ENCODE measurements at regions of chr5 and their contacts with region 1.

Region 1: DNA sequence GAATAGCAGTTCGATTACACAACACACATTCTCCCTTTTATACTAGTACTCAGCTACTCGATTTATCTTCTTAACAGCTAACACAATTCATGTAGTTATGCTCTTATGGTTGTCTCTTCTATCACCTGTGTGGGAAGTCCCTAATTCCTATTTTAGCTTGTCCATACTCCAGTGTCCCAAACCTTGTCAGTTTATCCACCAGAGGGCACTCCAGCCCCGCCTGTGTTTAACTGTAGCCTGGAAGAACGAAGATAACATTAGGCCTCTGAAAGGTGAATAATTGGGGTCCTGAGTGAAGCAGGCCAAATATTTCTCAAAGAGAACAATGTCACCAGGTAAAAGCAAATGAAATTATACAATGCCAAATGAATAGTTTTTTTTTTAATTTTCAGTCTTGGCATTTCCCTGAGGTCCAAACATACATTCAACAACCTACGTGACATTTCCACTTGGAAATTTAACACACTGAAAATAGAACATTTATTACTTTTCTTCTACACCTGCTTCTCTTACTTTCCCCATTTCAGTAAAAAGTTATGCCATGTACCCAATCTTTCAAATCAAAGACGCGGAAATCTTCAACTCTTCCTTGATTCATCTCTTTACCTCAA is 560.7 kb downstream of the HTR1A start:
- DNase-seq: peak; percentile 8
- ATAC-seq: peak; percentile 51
- H3K4me3 ChIP-seq: no peak overlapping the region
- H3K27ac ChIP-seq: no peak overlapping the region
- H3K4me1 ChIP-seq: no peaks in the 10 kb centered on the region
- H3K27me3 ChIP-seq: no peaks in the 10 kb centered on the region
- CTCF ChIP-seq: peak; percentile 57
- POLR2A ChIP-seq: no peak
- RAD21 ChIP-seq: peak; percentile 56

Region 2: DNA sequence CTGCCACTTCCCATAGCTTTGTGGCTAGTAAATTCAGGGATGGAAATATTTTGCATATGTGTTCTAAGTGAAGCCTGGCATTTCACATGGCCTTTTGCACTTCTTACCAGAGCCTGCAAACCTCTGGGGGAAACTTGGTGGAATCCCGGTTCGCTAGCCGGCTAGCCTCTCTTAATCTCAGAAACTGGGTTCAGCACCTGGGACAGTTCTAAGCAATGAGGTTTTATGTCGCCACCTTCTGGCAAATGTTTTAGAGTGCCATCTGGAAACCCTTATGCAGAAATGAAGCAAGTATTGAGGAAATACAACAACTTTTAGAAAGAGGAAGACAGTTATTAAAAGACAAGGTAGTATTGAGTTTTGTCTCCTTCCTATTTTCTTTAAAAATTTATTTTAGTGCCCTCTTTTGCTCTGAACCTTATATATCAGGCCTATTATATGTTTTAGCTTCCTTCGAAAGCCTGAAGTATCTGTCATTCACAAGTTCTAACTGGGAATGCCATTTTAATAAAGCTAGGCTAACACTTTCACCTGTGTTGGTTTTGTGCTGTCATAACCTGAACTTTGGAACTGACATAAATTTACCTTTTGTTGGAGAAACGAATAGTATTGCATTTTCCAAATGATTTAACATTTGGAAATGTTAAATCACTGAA is 561.7 kb after region 1 on chr5:
- CTCF ChIA-PET with region 1: interaction called, 11 read pairs
- POLR2A ChIA-PET with region 1: no interaction called
- dilution Hi-C with region 1: no loop called
- in situ Hi-C with region 1: no loop called
- intact Hi-C with region 1: no loop called
- DNase-seq: peak; percentile 52
- ATAC-seq: peak; percentile 48
- H3K4me3 ChIP-seq: no peak overlapping the region
- H3K27ac ChIP-seq: no peak overlapping the region
- H3K4me1 ChIP-seq: no peaks in the 10 kb centered on the region
- H3K27me3 ChIP-seq: no peaks in the 10 kb centered on the region
- CTCF ChIP-seq: peak; percentile 67
- POLR2A ChIP-seq: no peak
- RAD21 ChIP-seq: peak; percentile 45